ENCODE measurements at regions of chr11 and their contacts with region 1.

Region 1: GRCh38 chr11:12087075-12088004 is 23.1 kb upstream of the MICAL2 start:
- DNase-seq: peak; percentile 33 to 72
- H3K4me3 ChIP-seq: peak overlapping the region; percentile 53
- H3K27ac ChIP-seq: peak overlapping the region; percentile 100
- H3K4me1 ChIP-seq: peaks cover 78% of the 10 kb centered on the region
- H3K27me3 ChIP-seq: no peaks in the 10 kb centered on the region
- CTCF ChIP-seq: peak; percentile 19; the same call in 1 of the 2 replicates

Region 2: GRCh38 chr11:12052676-12053605 is 34.4 kb before region 1 on chr11:
- CTCF ChIA-PET with region 1: interaction called, 4 read pairs
- POLR2A ChIA-PET with region 1: interaction called, 3 read pairs
- intact Hi-C with region 1: loop called (anchors 5 kb)
- DNase-seq: no peak
- H3K4me3 ChIP-seq: no peak overlapping the region
- H3K27ac ChIP-seq: no peak overlapping the region
- H3K4me1 ChIP-seq: peaks cover 17% of the 10 kb centered on the region
- H3K27me3 ChIP-seq: no peaks in the 10 kb centered on the region
- CTCF ChIP-seq: no peak

Region 3: DNA sequence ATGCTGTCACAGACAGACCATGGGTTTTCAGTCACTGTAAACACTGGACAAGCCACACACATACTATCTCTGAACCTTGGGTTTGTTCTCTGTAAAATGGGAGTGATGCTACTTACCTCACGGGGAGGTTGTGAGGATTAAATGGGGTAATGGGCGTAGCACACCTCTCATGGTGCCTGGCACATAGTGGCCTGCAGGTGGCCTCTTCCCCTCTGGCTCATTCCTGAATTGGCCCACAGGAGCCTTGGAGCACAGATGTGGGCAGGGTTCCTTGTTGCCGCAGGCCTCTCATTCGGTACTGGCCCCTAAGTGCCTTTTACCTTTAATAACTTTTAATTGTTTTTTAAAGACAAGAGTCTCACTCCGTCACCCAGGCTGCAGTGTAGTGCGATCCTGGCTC is 34.7 kb after region 1 on chr11:
- CTCF ChIA-PET with region 1: interaction called, 6 read pairs
- POLR2A ChIA-PET with region 1: interaction called, 13 read pairs
- intact Hi-C with region 1: no loop called
- DNase-seq: no peak
- H3K4me3 ChIP-seq: no peak overlapping the region
- H3K27ac ChIP-seq: no peak overlapping the region
- H3K4me1 ChIP-seq: peaks cover 87% of the 10 kb centered on the region
- H3K27me3 ChIP-seq: no peaks in the 10 kb centered on the region
- CTCF ChIP-seq: peak; percentile 40; the same call in 1 of the 2 replicates

Region 4: DNA sequence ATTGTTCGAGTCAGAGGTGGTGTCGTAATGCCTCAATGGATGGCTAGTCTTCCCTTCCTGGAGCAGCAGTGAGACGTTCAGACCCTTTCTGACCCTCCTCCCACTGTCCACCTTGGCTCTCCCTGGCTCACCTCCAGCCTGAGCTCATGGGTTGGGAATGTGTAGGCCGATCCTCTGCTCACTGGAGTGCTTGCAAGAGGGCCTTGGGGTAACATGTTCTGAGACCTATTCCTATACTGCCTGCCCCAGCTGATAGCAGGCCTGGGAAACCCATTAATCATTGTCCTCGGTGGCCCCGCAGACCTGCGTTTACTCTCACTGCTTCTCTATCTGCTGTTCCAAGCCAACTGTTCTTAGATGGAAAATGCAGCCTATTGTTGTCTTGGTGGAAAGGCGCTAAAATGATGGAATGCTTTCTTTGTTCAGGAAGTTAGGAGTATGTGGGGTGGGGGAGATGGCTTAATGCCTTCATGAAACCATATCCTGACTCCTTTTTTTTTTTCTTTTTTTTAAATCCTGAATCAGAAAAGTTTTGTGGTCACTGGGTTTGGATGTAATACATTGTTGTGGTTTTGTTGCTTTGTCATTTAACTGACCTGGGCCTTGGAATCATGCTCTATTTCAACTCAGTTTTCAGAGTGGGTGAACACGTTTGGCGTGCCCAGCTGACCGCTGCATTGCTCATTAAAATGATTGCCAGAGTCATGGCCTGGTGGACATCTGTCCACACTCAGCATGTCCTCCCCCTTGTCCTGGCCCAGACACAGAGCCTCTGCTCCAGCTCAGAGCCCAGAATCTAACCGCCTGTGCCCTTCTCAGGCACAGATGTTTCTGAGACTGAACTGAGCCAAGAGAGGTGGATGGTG is 95.6 kb after region 1 on chr11:
- CTCF ChIA-PET with region 1: interaction called, 3 read pairs
- POLR2A ChIA-PET with region 1: interaction called, 9 read pairs
- intact Hi-C with region 1: loop called (anchors 2 kb)
- DNase-seq: peak; percentile 89 to 95
- H3K4me3 ChIP-seq: 0 out of 2 replicates have a peak overlapping the region, but pooled peaks have one; percentile 24
- H3K27ac ChIP-seq: peak overlapping the region; percentile 98
- H3K4me1 ChIP-seq: peaks cover 68% of the 10 kb centered on the region
- H3K27me3 ChIP-seq: no peaks in the 10 kb centered on the region
- CTCF ChIP-seq: no peak

Region 5: DNA sequence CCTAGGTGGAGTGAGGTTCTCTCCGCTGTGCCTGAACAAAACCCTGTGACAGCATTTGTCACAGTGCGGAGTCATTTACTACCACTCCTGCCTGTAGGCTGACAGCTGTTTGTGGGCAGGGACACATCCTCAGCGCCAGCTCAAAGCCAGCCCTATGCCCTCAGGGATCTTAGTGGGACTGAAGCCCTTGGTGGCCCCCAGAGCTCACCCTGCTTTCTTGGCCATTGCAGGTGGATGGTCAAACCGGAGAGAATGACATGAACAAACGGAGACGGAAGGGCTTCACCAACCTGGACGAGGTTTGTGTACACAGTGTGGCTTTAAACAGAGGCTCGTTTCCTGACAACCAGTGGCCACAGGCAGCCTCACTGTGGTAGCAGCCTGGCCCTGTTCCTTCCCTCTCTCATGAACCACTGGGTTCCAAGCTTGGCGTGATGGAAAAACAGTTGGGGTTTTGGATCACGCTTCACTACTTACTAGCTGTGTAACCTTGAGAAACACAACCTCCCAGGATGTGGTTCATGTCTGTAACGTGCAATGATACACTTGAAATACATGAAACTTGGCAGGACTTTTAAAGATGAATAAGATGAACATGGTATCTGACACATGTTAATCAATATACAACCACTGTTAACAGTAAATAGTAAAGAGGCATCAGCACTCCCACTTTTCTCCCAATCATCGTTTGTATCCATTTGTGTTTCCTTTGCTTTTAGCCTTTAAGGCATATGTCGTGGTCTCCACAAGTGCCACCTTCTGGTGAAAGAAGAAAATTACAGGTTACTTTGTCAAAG is 148.8 kb after region 1 on chr11:
- CTCF ChIA-PET with region 1: no interaction called
- POLR2A ChIA-PET with region 1: interaction called, 15 read pairs
- intact Hi-C with region 1: no loop called
- DNase-seq: no peak
- H3K4me3 ChIP-seq: no peak overlapping the region
- H3K27ac ChIP-seq: no peak overlapping the region
- H3K4me1 ChIP-seq: peaks cover 13% of the 10 kb centered on the region
- H3K27me3 ChIP-seq: no peaks in the 10 kb centered on the region
- CTCF ChIP-seq: peak; percentile 72

Region 6: DNA sequence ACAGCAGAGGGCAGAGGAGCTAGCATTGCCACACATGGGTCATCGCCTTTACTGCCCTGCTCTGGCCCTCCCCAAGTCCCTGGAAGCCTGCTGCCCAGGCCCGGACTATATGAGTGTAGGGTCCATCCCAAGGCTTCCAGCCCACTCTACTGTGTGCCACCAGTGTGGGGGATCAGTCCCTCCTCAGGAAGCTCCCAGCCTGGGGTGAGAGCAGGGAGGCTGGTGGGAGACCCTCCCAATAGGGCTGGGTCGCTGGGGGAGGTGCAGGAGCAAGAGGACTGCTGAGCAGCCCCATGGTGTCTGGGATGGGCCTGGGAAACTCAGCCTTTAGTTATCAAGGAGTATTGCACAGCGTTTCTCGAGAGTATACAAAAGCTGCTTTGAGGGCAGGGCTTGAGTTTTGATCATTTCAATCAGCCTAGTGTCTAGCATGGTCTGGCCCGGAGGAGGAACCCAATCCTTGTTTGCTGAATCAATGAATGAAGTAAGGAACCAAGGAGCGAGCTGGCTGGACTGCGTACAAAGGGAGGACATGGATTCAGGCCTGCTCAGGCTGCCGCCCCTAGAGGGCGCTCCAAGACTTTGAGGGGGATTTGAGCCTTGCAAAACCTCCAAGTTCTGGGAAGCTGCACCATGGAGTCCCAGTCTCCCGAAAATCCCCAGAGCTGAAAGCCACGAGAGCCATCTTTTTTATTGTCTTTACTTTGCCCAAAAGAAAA is 201.0 kb after region 1 on chr11:
- CTCF ChIA-PET with region 1: no interaction called
- POLR2A ChIA-PET with region 1: interaction called, 21 read pairs
- intact Hi-C with region 1: no loop called
- DNase-seq: peak; percentile 51 to 66
- H3K4me3 ChIP-seq: no peak overlapping the region
- H3K27ac ChIP-seq: peak overlapping the region; percentile 88
- H3K4me1 ChIP-seq: peaks cover 50% of the 10 kb centered on the region
- H3K27me3 ChIP-seq: no peaks in the 10 kb centered on the region
- CTCF ChIP-seq: peak; percentile 81

Region 7: GRCh38 chr11:12397931-12398334 is 310.6 kb after region 1 on chr11:
- CTCF ChIA-PET with region 1: no interaction called
- POLR2A ChIA-PET with region 1: no interaction called
- intact Hi-C with region 1: no loop called
- DNase-seq: no peak
- H3K4me3 ChIP-seq: no peak overlapping the region
- H3K27ac ChIP-seq: no peak overlapping the region
- H3K4me1 ChIP-seq: peaks cover 4% of the 10 kb centered on the region
- H3K27me3 ChIP-seq: no peaks in the 10 kb centered on the region
- CTCF ChIP-seq: no peak

Region 8: DNA sequence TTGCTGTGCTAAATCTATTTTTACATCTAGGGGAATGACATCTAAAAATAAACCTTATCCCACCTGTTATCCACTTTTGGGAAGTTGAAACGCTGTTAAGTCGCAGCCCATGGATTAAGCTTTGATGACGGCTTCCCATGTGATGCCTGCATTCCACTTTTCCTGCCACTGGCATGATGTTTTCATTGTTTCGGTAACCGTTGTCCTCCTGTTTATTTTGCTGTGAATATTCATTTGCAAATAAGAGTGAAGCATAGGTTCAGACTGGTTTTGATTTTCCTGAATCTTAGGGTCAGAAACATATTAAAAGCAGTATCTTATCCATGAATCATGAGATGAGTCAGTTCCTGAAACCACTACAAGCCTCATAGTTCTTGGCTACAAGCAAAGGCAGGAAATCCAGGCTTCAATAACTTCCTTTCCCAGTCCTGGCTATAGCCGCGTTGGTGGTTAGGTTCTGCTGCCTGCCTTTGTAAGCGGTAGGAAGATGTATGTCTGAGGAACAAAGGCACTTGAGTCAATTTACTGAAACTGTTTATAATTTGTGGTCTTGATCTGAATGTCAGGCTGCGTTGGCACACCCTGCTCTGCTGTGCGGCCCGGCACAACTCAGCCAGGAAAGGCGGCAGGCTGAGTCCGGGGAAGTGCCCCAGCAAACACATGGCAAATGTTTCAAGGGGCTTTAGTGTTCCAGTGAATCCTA is 606.3 kb after region 1 on chr11:
- CTCF ChIA-PET with region 1: no interaction called
- POLR2A ChIA-PET with region 1: no interaction called
- intact Hi-C with region 1: loop called (anchors 10 kb)
- DNase-seq: peak; percentile 44 to 92
- H3K4me3 ChIP-seq: peak overlapping the region; percentile 49
- H3K27ac ChIP-seq: peak overlapping the region; percentile 99
- H3K4me1 ChIP-seq: peaks cover 96% of the 10 kb centered on the region
- H3K27me3 ChIP-seq: no peaks in the 10 kb centered on the region
- CTCF ChIP-seq: no peak